Activated CD8-positive, alpha-beta T cell treated with anti-CD3 and anti-CD28 coated beads for 36 hours (primary cell): ENCODE measurements at regions of chr12 and their contacts with region 1.

Region 1: GRCh38 chr12:118357257-118358007 is 15.3 kb downstream of the TAOK3 start:
- DNase-seq: peak; percentile 77
- ATAC-seq: peak; percentile 81
- H3K4me3 Mint-ChIP-seq: peak overlapping the region; percentile 88
- H3K27ac Mint-ChIP-seq: peak overlapping the region; percentile 96
- H3K4me1 Mint-ChIP-seq: peaks cover 46% of the 10 kb centered on the region
- H3K27me3 Mint-ChIP-seq: no peaks in the 10 kb centered on the region
- CTCF ChIP-seq: peak; percentile 72

Region 2: DNA sequence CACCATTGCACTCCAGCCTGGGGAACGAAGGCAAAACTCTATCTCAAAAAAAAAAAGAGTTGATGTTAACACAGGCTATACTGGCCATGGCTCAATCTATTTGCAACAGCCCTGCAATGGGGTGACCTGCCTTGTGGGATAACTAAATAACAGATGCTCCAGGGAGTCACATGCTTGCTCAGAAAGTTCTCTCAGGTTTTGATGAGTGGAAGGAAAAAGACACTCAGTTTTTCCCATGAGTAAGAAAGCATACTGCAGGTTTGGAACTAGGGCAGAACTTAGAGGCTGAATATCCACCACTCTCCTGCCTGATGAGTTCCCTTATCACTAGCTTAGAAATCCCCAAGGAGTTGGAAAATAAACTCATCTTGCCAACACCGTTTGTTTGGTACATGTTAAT is 313.4 kb before region 1 on chr12:
- CTCF ChIA-PET with region 1: no interaction called
- POLR2A ChIA-PET with region 1: no interaction called
- intact Hi-C with region 1: loop called (anchors 5 kb)
- DNase-seq: no peak
- ATAC-seq: peak; percentile 20
- H3K4me3 Mint-ChIP-seq: no peak overlapping the region
- H3K27ac Mint-ChIP-seq: peak overlapping the region; percentile 82
- H3K4me1 Mint-ChIP-seq: peaks cover 37% of the 10 kb centered on the region
- H3K27me3 Mint-ChIP-seq: no peaks in the 10 kb centered on the region
- CTCF ChIP-seq: no peak

Region 3: DNA sequence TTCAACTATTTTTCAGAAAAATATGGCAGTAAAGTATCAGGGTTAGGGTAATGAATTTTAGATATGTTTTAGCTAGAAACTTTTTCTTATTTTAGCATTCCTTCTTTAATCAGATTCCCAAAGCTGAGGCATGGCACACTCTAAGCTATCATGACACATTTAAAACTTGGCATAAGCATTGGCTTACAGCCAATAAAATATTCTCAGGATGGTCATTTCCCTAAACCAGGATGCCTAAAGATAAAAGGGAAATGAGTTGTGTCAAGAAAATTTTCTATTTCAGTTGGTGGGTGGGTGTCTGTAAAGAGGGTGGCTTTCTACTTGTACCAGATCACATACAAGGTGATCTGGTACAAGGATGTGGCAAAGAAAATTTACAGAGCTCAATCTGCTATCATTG is 173.7 kb before region 1 on chr12:
- CTCF ChIA-PET with region 1: interaction called, 12 read pairs
- POLR2A ChIA-PET with region 1: interaction called, 5 read pairs
- intact Hi-C with region 1: no loop called
- DNase-seq: no peak
- ATAC-seq: no peak
- H3K4me3 Mint-ChIP-seq: no peak overlapping the region
- H3K27ac Mint-ChIP-seq: peak overlapping the region; percentile 11
- H3K4me1 Mint-ChIP-seq: peaks cover 27% of the 10 kb centered on the region
- H3K27me3 Mint-ChIP-seq: no peaks in the 10 kb centered on the region
- CTCF ChIP-seq: no peak

Region 4: DNA sequence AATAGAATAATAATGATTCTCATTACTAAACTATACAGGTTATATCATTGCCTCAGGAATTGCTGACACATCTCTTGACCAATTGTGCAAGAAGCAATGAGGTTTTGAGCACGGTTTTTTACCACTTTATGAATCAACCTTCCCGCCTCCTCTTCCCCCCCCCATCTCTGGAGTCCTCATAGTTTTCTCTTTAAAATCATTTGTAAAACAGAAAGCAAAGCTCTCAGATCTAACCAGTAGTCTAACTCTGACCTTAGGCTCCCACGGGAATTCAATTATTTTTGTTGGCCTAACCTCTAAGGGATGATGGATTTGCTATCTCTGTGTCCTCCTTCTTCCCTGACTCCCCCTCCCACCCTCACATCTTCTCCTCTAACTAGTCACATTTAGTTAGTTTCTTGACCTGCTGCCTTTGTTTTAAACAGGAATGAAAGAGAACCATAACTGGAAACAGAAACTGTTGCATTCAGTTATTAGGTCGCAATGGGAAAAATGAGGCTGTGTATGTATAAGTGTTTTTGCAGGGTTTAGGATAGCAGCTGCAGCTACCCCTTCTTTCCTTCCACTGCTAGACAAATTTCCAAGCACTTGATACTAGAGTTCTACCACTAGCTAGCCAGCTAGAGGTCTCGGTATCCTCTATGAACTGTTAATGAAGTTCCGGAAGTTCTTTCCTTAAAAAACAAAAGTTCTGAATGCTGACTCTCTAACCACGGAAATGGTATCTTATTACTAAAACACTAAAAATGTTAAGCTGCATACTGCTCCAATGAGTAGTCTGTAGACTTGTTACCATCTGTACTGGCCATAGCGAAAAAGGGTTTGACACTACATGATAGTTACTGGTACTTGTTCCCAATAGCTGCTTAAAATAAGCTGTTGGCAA is 50.1 kb before region 1 on chr12:
- CTCF ChIA-PET with region 1: interaction called, 5 read pairs
- POLR2A ChIA-PET with region 1: interaction called, 3 read pairs
- intact Hi-C with region 1: loop called (anchors 2 kb)
- DNase-seq: peak; percentile 77
- ATAC-seq: peak; percentile 74
- H3K4me3 Mint-ChIP-seq: peak overlapping the region; percentile 70
- H3K27ac Mint-ChIP-seq: peak overlapping the region; percentile 81
- H3K4me1 Mint-ChIP-seq: peaks cover 48% of the 10 kb centered on the region
- H3K27me3 Mint-ChIP-seq: no peaks in the 10 kb centered on the region
- CTCF ChIP-seq: no peak

Region 5: DNA sequence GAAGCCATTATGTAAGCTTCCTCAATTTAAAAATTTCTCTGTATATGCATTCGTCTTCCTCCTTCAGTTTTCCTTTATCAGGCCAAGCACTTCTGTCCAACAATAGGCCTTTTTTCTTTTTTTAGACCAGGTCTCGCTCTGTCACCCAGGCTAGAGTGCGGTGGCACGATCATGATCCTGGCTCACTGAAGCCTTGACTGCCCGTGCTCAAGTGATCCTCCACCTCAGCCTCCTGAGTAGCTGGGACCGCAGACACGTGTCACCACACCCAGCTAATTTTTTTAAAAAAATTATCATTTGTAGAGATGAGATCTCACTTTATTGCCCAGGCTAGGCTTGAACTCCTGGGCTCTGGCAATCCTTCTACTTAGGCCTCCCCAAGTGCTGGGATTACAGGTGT is 10.5 kb before region 1 on chr12:
- CTCF ChIA-PET with region 1: interaction called, 15 read pairs
- POLR2A ChIA-PET with region 1: interaction called, 6 read pairs
- intact Hi-C with region 1: no loop called
- DNase-seq: no peak
- ATAC-seq: no peak
- H3K4me3 Mint-ChIP-seq: no peak overlapping the region
- H3K27ac Mint-ChIP-seq: no peak overlapping the region
- H3K4me1 Mint-ChIP-seq: peaks cover 40% of the 10 kb centered on the region
- H3K27me3 Mint-ChIP-seq: no peaks in the 10 kb centered on the region
- CTCF ChIP-seq: no peak

Region 6: GRCh38 chr12:118850244-118850825 is 492.9 kb after region 1 on chr12:
- CTCF ChIA-PET with region 1: no interaction called
- POLR2A ChIA-PET with region 1: no interaction called
- intact Hi-C with region 1: no loop called
- DNase-seq: peak; percentile 39
- ATAC-seq: no peak
- H3K4me3 Mint-ChIP-seq: no peak overlapping the region
- H3K27ac Mint-ChIP-seq: no peak overlapping the region
- H3K4me1 Mint-ChIP-seq: no peaks in the 10 kb centered on the region
- H3K27me3 Mint-ChIP-seq: peaks cover 3% of the 10 kb centered on the region
- CTCF ChIP-seq: peak; percentile 83